ENCODE measurements at regions of chr16 and their contacts with region 1.

Region 1: DNA sequence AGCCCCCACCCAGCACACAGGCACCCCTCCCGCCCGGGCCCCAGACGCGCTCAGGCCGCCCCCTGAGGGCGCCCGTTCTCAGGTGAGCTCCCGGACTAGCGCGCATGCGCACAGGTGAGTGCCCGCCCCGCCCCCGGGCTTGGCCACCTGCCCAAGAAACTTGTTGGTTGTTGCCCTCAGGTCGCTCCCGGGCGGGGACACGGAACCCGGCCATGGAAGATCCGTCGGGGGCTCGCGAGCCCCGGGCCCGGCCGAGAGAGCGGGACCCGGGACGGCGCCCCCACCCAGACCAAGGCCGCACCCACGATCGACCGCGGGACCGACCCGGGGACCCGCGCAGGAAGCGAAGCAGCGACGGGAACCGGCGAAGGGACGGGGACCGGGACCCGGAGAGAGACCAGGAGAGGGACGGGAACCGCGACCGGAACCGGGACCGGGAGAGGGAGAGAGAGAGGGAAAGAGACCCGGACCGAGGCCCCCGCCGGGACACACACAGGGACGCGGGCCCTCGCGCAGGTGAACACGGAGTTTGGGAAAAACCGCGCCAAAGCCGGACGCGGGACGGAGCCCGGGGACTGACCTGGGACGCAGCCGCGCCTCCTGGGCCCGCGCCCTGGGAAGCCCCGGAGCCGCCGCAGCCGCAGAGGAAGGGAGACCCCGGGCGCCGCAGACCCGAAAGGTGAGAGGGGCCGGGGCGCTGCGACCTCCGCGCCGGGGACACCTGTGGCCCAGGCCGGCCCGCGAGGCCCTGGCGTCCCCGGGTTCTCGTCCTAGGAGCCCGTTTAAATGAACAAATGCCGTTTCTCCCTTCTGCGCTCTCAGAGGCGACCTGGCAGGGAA is at the start of gene MARVELD3:
- DNase-seq: peak; percentile 77 to 96
- H3K4me3 ChIP-seq: peak within 1 kb of the TSS; percentile 99
- H3K27ac ChIP-seq: peak within 1 kb of the TSS; percentile 53
- H3K4me1 ChIP-seq: peaks cover 28% of the 10 kb centered on the region
- H3K27me3 ChIP-seq: no peaks in the 10 kb centered on the region
- CTCF ChIP-seq: no peak
- total RNA-seq, gene MARVELD3: 28.5 and 28.6 TPM in 2 replicates

Region 2: DNA sequence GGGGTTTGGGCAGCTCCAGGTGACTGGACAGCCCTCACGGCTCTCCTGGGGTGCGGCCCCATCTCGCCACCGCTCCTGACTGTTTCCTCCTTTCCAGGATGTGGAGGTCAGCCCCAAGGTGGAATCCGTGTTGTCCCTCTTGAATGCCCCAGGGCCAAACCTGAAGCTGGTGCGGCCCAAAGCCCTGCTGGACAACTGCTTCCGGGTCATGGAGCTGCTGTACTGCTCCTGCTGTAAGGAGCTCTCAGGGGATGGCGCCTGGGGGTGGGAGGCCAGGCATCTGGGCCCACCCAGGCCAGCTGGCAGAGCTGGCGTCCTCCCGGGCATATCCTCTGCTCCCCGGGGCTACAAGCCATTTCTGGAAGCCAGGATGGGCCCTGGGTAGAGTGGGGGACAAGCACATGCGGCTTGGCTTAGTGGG is 966.7 kb before region 1 on chr16:
- CTCF ChIA-PET with region 1: no interaction called
- POLR2A ChIA-PET with region 1: interaction called, 21 read pairs
- intact Hi-C with region 1: no loop called
- DNase-seq: no peak
- H3K4me3 ChIP-seq: no peak overlapping the region
- H3K27ac ChIP-seq: no peak overlapping the region
- H3K4me1 ChIP-seq: no peaks in the 10 kb centered on the region
- H3K27me3 ChIP-seq: no peaks in the 10 kb centered on the region
- CTCF ChIP-seq: no peak

Region 3: GRCh38 chr16:71499775-71500364 is 126.4 kb before region 1 on chr16:
- CTCF ChIA-PET with region 1: interaction called, 11 read pairs
- POLR2A ChIA-PET with region 1: no interaction called
- intact Hi-C with region 1: no loop called
- DNase-seq: peak; percentile 40 to 56
- H3K4me3 ChIP-seq: no peak overlapping the region
- H3K27ac ChIP-seq: no peak overlapping the region
- H3K4me1 ChIP-seq: peaks cover 5% of the 10 kb centered on the region
- H3K27me3 ChIP-seq: no peaks in the 10 kb centered on the region
- CTCF ChIP-seq: peak; percentile 85

Region 4: GRCh38 chr16:71600822-71601221 is 25.4 kb before region 1 on chr16:
- CTCF ChIA-PET with region 1: no interaction called
- POLR2A ChIA-PET with region 1: no interaction called
- intact Hi-C with region 1: no loop called
- DNase-seq: no peak
- H3K4me3 ChIP-seq: no peak overlapping the region
- H3K27ac ChIP-seq: no peak overlapping the region
- H3K4me1 ChIP-seq: peaks cover 9% of the 10 kb centered on the region; the same call in 1 of the 2 replicates
- H3K27me3 ChIP-seq: no peaks in the 10 kb centered on the region
- CTCF ChIP-seq: no peak

Region 5: DNA sequence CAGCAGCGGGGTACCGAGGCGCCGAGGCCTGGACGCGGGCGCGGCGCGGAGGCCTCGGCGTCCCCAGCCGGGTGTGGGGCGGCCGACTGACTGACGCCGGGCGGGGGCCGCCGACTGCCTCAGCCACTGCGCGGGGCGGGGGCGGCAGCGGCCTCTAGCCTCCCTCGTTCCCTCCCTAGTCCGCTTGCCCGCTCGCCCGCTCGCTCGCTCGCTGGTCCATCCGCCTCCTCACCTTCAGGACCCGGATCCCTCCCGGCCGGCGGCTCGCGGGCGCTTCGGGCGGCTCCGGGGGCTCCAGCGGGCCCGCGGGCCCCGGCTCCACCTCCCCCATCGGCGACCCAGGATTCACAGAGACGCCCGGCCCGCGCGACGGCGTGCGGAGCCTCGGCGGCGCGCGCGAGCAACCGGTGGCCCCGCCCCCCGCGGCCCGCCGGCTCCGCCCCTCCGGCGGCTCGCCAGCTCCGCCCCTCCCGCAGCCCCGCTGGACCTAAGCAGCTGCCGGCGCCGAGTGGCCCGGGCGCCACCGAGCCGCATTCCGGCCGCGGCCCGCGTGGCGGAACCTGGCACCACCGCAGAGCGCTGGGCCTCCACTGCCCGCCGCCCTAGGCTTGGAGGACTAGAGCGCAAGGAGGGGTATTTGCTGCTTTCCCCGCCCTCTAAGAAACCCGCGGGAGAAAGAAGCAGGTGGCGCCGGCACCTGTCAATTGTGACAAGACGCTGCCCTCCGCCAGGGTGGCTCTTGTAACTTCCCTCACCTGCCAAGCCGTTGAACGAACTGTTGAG is 97.5 kb after region 1 on chr16:
- CTCF ChIA-PET with region 1: no interaction called
- POLR2A ChIA-PET with region 1: no interaction called
- intact Hi-C with region 1: loop called (anchors 5 kb)
- DNase-seq: peak; percentile 60 to 77
- H3K4me3 ChIP-seq: peak overlapping the region; percentile 74; the same call in 1 of the 2 replicates
- H3K27ac ChIP-seq: no peak overlapping the region
- H3K4me1 ChIP-seq: peaks cover 15% of the 10 kb centered on the region
- H3K27me3 ChIP-seq: no peaks in the 10 kb centered on the region
- CTCF ChIP-seq: no peak

Region 6: GRCh38 chr16:71865173-71865863 is 239.1 kb after region 1 on chr16:
- CTCF ChIA-PET with region 1: interaction called, 12 read pairs
- POLR2A ChIA-PET with region 1: no interaction called
- intact Hi-C with region 1: no loop called
- DNase-seq: no peak
- H3K4me3 ChIP-seq: no peak overlapping the region
- H3K27ac ChIP-seq: no peak overlapping the region
- H3K4me1 ChIP-seq: no peaks in the 10 kb centered on the region
- H3K27me3 ChIP-seq: no peaks in the 10 kb centered on the region
- CTCF ChIP-seq: no peak

Region 7: GRCh38 chr16:72142476-72142875 is 516.2 kb after region 1 on chr16:
- CTCF ChIA-PET with region 1: interaction called, 18 read pairs
- POLR2A ChIA-PET with region 1: no interaction called
- intact Hi-C with region 1: no loop called
- DNase-seq: no peak
- H3K4me3 ChIP-seq: no peak overlapping the region
- H3K27ac ChIP-seq: no peak overlapping the region
- H3K4me1 ChIP-seq: no peaks in the 10 kb centered on the region
- H3K27me3 ChIP-seq: peaks cover 55% of the 10 kb centered on the region
- CTCF ChIP-seq: no peak

Region 8: GRCh38 chr16:72568502-72568901 is 942.3 kb after region 1 on chr16:
- CTCF ChIA-PET with region 1: no interaction called
- POLR2A ChIA-PET with region 1: interaction called, 11 read pairs
- intact Hi-C with region 1: no loop called
- DNase-seq: no peak
- H3K4me3 ChIP-seq: no peak overlapping the region
- H3K27ac ChIP-seq: no peak overlapping the region
- H3K4me1 ChIP-seq: no peaks in the 10 kb centered on the region
- H3K27me3 ChIP-seq: no peaks in the 10 kb centered on the region
- CTCF ChIP-seq: no peak

Measured in PC-9 (cell line).